CD4-positive, alpha-beta memory T cell (primary cell): ENCODE measurements at regions of chr2 and their contacts with region 1.

Region 1: GRCh38 chr2:174465327-174465726 is 21.5 kb downstream of the GPR155 start:
- DNase-seq: no peak
- H3K4me3 ChIP-seq: no peak overlapping the region
- H3K4me3 Mint-ChIP-seq: no peak overlapping the region
- H3K27ac ChIP-seq: no peak overlapping the region
- H3K27ac Mint-ChIP-seq: peak overlapping the region in 1 of 7 donors; percentile 60
- H3K4me1 ChIP-seq: no peaks in the 10 kb centered on the region
- H3K4me1 Mint-ChIP-seq: no peaks in the 10 kb centered on the region
- H3K27me3 ChIP-seq: no peaks in the 10 kb centered on the region
- H3K27me3 Mint-ChIP-seq: no peaks in the 10 kb centered on the region

Region 2: DNA sequence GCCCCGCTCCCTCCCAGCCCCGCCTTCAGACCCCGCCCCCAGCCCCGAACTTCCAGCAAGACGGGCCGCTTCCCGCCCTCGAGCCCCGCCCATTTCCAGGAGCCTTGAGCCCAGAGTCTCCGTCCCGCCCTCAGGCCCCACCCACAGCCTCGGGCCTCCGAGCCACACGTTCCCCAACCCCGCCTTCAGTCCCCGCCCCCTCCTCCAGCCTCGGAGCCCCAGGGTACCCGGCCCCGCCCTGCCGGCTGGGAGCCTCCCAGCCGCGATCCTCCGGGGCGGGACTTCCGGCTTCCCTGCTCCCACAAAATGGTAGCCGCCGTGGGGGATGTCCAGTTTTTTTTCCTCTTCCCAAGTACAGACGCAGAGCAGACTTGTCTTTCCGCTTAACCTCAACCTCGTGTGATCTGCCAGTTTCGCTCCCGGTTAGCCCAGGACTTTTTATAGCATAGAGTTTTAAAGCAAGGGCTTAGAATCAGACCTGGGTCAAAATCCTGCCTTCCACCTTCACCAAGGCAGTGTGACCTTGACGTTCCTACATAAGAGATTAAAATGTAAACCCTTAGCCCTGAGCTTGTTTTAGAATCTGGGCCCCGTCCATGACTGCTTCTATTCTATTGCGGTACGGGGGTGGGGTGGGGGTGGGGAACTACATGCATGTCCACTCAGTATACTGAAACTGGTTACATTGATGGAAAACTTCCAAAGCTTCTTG is 21.9 kb after region 1 on chr2:
- CTCF ChIA-PET with region 1: interaction called, 64 read pairs
- POLR2A ChIA-PET with region 1: interaction called, 20 read pairs
- intact Hi-C with region 1: loop called (anchors 2 kb)
- DNase-seq: peak; percentile 77 to 94 (median 82)
- H3K4me3 ChIP-seq: peak overlapping the region; percentile 4 to 77
- H3K4me3 Mint-ChIP-seq: peak overlapping the region; percentile 91 to 100 (median 98)
- H3K27ac ChIP-seq: peak overlapping the region; percentile 81
- H3K27ac Mint-ChIP-seq: peak overlapping the region; percentile 91 to 97 (median 94)
- H3K4me1 ChIP-seq: peaks cover 76% of the 10 kb centered on the region
- H3K4me1 Mint-ChIP-seq: peaks cover 48 to 87% (median 64%) of the 10 kb centered on the region in 4 donors
- H3K27me3 ChIP-seq: no peaks in the 10 kb centered on the region
- H3K27me3 Mint-ChIP-seq: no peaks in the 10 kb centered on the region

Region 3: GRCh38 chr2:174522553-174522952 is 57.2 kb after region 1 on chr2:
- CTCF ChIA-PET with region 1: interaction called, 169 read pairs
- POLR2A ChIA-PET with region 1: interaction called, 3 read pairs
- intact Hi-C with region 1: loop called (anchors 1 kb)
- DNase-seq: peak in 2 of 5 donors; percentile 7 to 13
- H3K4me3 ChIP-seq: no peak overlapping the region
- H3K4me3 Mint-ChIP-seq: no peak overlapping the region
- H3K27ac ChIP-seq: no peak overlapping the region
- H3K27ac Mint-ChIP-seq: no peak overlapping the region
- H3K4me1 ChIP-seq: no peaks in the 10 kb centered on the region
- H3K4me1 Mint-ChIP-seq: peaks cover 5 to 9% (median 8%) of the 10 kb centered on the region in 4 donors
- H3K27me3 ChIP-seq: no peaks in the 10 kb centered on the region
- H3K27me3 Mint-ChIP-seq: peaks cover 0 to 2% of the 10 kb centered on the region in 2 donors

Region 4: GRCh38 chr2:174553811-174554493 is 88.6 kb after region 1 on chr2:
- CTCF ChIA-PET with region 1: interaction called, 17 read pairs
- POLR2A ChIA-PET with region 1: interaction called, 6 read pairs
- intact Hi-C with region 1: no loop called
- DNase-seq: peak; percentile 33 to 58 (median 49)
- H3K4me3 ChIP-seq: no peak overlapping the region
- H3K4me3 Mint-ChIP-seq: peak overlapping the region; percentile 57 to 85 (median 74)
- H3K27ac ChIP-seq: peak overlapping the region; percentile 67
- H3K27ac Mint-ChIP-seq: peak overlapping the region; percentile 83 to 97 (median 89)
- H3K4me1 ChIP-seq: peaks cover 39% of the 10 kb centered on the region
- H3K4me1 Mint-ChIP-seq: peaks cover 31 to 52% (median 37%) of the 10 kb centered on the region in 4 donors
- H3K27me3 ChIP-seq: no peaks in the 10 kb centered on the region
- H3K27me3 Mint-ChIP-seq: no peaks in the 10 kb centered on the region

Region 5: GRCh38 chr2:174603280-174603679 is 138.0 kb after region 1 on chr2:
- CTCF ChIA-PET with region 1: interaction called, 39 read pairs
- POLR2A ChIA-PET with region 1: interaction called, 7 read pairs
- intact Hi-C with region 1: loop called (anchors 1 kb)
- DNase-seq: peak; percentile 58 to 81 (median 63)
- H3K4me3 ChIP-seq: no peak overlapping the region
- H3K4me3 Mint-ChIP-seq: peak overlapping the region in 6 of 8 donors; percentile 13 to 62 (median 32)
- H3K27ac ChIP-seq: peak overlapping the region; percentile 11
- H3K27ac Mint-ChIP-seq: peak overlapping the region; percentile 71 to 99 (median 89)
- H3K4me1 ChIP-seq: peaks cover 84% of the 10 kb centered on the region
- H3K4me1 Mint-ChIP-seq: peaks cover 71 to 96% (median 78%) of the 10 kb centered on the region in 4 donors
- H3K27me3 ChIP-seq: no peaks in the 10 kb centered on the region
- H3K27me3 Mint-ChIP-seq: no peaks in the 10 kb centered on the region

Region 6: DNA sequence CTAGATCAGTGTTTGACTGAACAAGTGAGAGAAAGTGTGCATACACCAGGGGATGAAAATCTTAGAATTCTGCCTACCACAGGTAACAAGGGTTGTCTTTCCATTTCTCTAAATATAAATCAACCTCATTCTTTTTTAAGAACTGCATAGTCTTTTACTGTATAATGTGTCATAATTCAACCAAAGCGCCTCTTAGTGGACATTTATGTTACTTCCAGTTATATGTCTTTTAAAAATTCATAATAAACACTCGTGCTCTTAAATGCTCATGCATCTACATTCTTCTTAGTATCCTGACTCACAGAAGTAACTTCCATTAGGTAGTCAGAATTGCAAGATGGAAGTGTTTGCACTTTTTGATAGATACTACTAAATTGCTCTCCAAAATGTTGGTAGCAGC is 222.8 kb after region 1 on chr2:
- CTCF ChIA-PET with region 1: interaction called, 138 read pairs
- POLR2A ChIA-PET with region 1: interaction called, 4 read pairs
- intact Hi-C with region 1: loop called (anchors 1 kb)
- DNase-seq: peak in 4 of 5 donors; percentile 44 to 55 (median 48)
- H3K4me3 ChIP-seq: no peak overlapping the region
- H3K4me3 Mint-ChIP-seq: peak overlapping the region in 1 of 8 donors; percentile 17
- H3K27ac ChIP-seq: no peak overlapping the region
- H3K27ac Mint-ChIP-seq: peak overlapping the region; percentile 1 to 81 (median 56)
- H3K4me1 ChIP-seq: peaks cover 14% of the 10 kb centered on the region
- H3K4me1 Mint-ChIP-seq: peaks cover 13 to 25% (median 19%) of the 10 kb centered on the region in 4 donors
- H3K27me3 ChIP-seq: no peaks in the 10 kb centered on the region
- H3K27me3 Mint-ChIP-seq: peaks cover 0 to 2% of the 10 kb centered on the region in 2 donors

Region 7: DNA sequence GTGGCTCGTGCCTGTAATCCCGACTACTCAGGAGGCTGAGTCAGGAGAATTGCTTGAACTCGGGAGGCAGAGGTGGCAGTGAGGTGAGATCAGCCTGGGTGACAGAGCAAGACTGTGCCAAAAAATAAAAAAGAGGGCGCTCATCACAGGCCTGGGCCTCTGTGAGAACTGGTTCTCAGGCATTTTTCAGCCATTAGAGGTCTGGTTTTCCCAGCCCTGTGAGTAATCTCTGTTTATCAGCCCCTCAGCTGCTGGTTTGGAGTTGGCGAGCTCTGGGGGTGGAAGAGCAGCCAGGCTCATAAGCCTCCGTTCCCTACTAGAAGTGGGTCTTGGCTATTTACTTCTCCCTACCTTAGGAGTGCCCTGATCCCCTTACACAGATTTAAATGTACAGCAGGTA is 245.9 kb after region 1 on chr2:
- CTCF ChIA-PET with region 1: no interaction called
- POLR2A ChIA-PET with region 1: no interaction called
- intact Hi-C with region 1: no loop called
- DNase-seq: no peak
- H3K4me3 ChIP-seq: no peak overlapping the region
- H3K4me3 Mint-ChIP-seq: no peak overlapping the region
- H3K27ac ChIP-seq: no peak overlapping the region
- H3K27ac Mint-ChIP-seq: no peak overlapping the region
- H3K4me1 ChIP-seq: peaks cover 2% of the 10 kb centered on the region
- H3K4me1 Mint-ChIP-seq: peaks cover 0 to 2% (median 1%) of the 10 kb centered on the region in 4 donors
- H3K27me3 ChIP-seq: peaks cover 4% of the 10 kb centered on the region
- H3K27me3 Mint-ChIP-seq: peaks cover 6 to 8% of the 10 kb centered on the region in 2 donors